Activated B cell treated with CpG ODN at 0.5 μM for 24 hours (primary cell): ENCODE measurements at regions of chr7 and their contacts with region 1.

Region 1: DNA sequence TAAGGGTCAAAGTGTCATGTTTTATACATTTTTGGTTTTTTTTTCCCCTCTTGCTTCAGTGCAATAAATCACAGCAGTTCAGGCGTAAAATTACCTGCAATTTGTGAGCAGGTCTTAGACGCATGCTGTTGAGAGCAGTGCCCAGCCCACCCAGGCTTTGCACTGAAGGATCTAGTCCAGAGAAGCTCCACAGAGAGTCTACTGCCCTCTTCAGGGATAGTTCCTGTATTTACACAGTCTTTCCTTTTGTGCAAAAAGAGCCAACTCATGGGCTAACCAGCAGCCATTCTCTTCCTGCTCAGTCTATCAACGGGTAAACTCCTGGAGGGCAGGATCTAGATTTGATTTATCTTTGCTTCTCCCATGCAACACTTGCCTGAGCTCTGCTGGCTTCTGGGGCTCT is 82.2 kb upstream of the NAMPT start:
- DNase-seq: no peak
- ATAC-seq: peak; percentile 65
- H3K4me3 Mint-ChIP-seq: no peak overlapping the region
- H3K27ac Mint-ChIP-seq: no peak overlapping the region
- H3K4me1 Mint-ChIP-seq: peaks cover 4% of the 10 kb centered on the region
- H3K27me3 Mint-ChIP-seq: peaks cover 4% of the 10 kb centered on the region
- CTCF ChIP-seq: no peak

Region 2: GRCh38 chr7:106176414-106177299 is 190.4 kb before region 1 on chr7:
- CTCF ChIA-PET with region 1: interaction called, 14 read pairs
- POLR2A ChIA-PET with region 1: no interaction called
- intact Hi-C with region 1: loop called (anchors 1 kb)
- DNase-seq: peak; percentile 64
- ATAC-seq: peak; percentile 91
- H3K4me3 Mint-ChIP-seq: no peak overlapping the region
- H3K27ac Mint-ChIP-seq: no peak overlapping the region
- H3K4me1 Mint-ChIP-seq: peaks cover 11% of the 10 kb centered on the region
- H3K27me3 Mint-ChIP-seq: peaks cover 4% of the 10 kb centered on the region
- CTCF ChIP-seq: peak; percentile 41

Region 3: DNA sequence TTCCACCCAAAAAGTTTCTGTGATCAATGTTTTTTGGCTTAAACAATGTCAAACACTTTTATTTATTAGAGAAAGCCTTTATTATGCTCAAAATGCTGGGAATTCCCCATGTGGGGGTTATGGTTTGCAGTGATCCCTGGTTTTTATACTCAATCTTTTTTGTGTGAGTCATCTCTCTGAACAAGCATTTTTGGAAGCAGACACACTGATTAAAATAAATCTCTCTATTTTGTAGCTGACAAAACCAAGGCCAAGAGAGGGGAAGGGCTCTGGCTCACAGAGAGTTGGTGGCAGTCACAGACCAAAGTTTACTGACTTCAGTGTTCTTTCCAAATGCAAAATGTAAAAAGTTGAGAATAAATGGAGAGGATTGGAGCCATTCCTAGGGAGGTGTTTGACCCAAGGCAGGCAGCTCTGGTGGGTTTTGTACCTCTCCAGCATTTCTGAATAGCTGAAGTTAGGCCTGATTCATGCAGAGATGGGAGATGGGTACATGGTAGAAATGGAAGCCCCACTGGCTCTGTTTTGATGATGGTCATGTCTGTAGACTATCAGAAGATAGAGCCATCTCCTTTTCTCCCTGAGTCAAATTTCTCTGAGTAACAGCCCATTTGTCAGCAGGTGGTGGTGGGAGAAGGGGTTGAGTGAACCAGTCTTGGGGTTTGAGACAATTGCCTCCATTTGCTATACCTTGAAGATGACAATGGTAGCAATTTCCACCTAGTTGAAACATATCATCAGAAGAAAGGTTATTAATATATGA is 36.9 kb before region 1 on chr7:
- CTCF ChIA-PET with region 1: no interaction called
- POLR2A ChIA-PET with region 1: no interaction called
- intact Hi-C with region 1: no loop called
- DNase-seq: no peak
- ATAC-seq: no peak
- H3K4me3 Mint-ChIP-seq: no peak overlapping the region
- H3K27ac Mint-ChIP-seq: no peak overlapping the region
- H3K4me1 Mint-ChIP-seq: no peaks in the 10 kb centered on the region
- H3K27me3 Mint-ChIP-seq: peaks cover 10% of the 10 kb centered on the region
- CTCF ChIP-seq: no peak